Activated T-helper 1 cell treated with anti-CD3 and anti-CD28 coated beads, Interleukin-12 subunit alpha, Interleukin-12 subunit beta, Interleukin-2, Interleukin-4 antibody, amounts not matched to agents 30 ng/mL and 10 ng/mL and 1 ng/mL, durations not matched to agents 14 hours and 24 hours and 36 hours (primary cell): ENCODE measurements at regions of chr6 and their contacts with region 1.

Region 1: GRCh38 chr6:30326526-30327260 is at the start of gene TRIM39:
- DNase-seq: peak; percentile 85
- H3K4me3 Mint-ChIP-seq: peak within 1 kb of the TSS; percentile 99
- H3K27ac Mint-ChIP-seq: peak within 1 kb of the TSS; percentile 100
- H3K4me1 Mint-ChIP-seq: peaks cover 54% of the 10 kb centered on the region
- H3K27me3 Mint-ChIP-seq: no peaks in the 10 kb centered on the region
- total RNA-seq, gene TRIM39: 14.2 and 15.6 TPM in 2 replicates

Region 2: GRCh38 chr6:30259140-30260035 is 67.3 kb before region 1 on chr6:
- intact Hi-C with region 1: loop called (anchors 2 kb)
- DNase-seq: peak; percentile 65
- H3K4me3 Mint-ChIP-seq: peak overlapping the region; percentile 87
- H3K27ac Mint-ChIP-seq: peak overlapping the region; percentile 79
- H3K4me1 Mint-ChIP-seq: peaks cover 15% of the 10 kb centered on the region
- H3K27me3 Mint-ChIP-seq: peaks cover 19% of the 10 kb centered on the region

Region 3: DNA sequence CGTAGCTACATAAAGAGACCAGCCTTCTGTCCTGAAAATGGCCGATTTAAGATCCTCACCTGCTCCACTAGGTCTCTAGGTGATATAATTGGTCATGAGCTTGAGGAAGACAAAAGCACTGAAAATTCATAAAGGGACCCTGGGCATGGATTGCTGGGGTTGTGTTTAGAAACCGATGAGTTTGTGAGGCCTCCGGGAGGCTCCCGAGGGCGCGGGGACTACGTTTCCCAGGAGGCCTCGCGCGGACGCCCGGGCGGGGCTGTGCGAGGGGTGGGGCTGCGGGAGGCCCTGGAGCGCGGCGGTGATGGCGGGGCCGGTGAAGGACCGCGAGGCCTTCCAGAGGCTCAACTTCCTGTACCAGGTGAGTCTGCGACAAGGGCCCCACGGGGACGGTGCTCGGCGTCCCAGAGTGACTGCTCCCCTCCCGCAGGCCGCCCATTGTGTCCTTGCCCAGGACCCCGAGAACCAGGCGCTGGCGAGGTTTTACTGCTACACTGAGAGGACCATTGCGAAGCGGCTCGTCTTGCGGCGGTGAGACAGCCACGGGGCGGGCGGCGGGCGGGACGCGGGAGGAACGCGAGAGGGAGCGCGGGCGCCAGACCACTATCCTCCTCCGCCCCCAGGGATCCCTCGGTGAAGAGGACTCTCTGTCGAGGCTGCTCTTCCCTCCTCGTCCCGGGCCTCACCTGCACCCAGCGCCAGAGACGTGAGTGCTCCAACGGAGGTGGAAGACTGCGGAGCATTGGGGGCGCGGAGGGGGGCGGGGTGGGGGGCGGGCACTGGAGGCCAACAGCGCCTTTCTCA is 18.4 kb after region 1 on chr6 and contains the start of gene RPP21:
- intact Hi-C with region 1: loop called (anchors 1 kb)
- DNase-seq: peak; percentile 84
- H3K4me3 Mint-ChIP-seq: peak within 1 kb of the TSS; percentile 91
- H3K27ac Mint-ChIP-seq: peak within 1 kb of the TSS; percentile 80
- H3K4me1 Mint-ChIP-seq: peaks cover 39% of the 10 kb centered on the region
- H3K27me3 Mint-ChIP-seq: peaks cover 5% of the 10 kb centered on the region
- total RNA-seq, gene RPP21: 54.2 and 62.8 TPM in 2 replicates

Region 4: GRCh38 chr6:30378290-30378937 is 51.7 kb after region 1 on chr6:
- intact Hi-C with region 1: no loop called
- DNase-seq: no peak
- H3K4me3 Mint-ChIP-seq: no peak overlapping the region
- H3K27ac Mint-ChIP-seq: no peak overlapping the region
- H3K4me1 Mint-ChIP-seq: no peaks in the 10 kb centered on the region
- H3K27me3 Mint-ChIP-seq: peaks cover 44% of the 10 kb centered on the region

Region 5: DNA sequence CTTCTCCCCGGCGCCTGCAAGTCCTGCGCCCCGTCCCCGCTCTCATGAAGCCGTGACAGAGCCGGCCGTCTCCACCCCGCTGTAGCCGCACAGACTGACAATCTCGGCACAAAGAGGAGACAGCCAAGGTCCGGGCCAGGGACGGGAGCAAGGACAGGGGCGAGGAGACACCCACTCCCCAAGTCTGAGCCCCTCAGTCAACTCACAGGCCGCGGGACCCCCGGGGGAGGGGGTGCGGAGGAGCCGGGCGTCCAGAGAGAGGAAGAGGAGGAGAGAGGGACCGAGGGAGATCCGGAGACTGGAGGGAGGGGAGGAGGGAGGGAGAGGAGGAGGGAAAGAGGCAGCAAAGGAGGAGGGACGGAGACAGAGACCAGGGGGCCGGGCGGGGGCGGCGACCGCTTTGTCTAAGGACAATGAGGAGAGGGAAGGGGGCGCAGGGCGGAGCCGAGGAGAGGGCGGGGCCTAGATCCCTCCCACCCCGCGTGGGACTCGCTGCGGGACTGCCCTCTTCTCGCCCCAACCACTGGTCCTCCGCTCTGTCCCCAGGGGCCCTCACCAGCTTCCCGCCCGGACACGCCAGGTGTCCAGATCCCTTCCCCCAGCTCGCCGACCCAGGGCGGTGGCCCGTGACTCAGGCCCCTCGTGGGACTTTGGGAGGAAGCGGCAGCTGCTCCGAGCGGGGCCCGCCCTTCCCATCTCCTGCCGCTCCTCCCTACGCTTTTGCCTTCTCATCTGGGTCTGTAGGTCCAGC is 360.4 kb after region 1 on chr6:
- intact Hi-C with region 1: loop called (anchors 10 kb)
- DNase-seq: peak; percentile 83
- H3K4me3 Mint-ChIP-seq: peak overlapping the region; percentile 94
- H3K27ac Mint-ChIP-seq: peak overlapping the region; percentile 87
- H3K4me1 Mint-ChIP-seq: peaks cover 50% of the 10 kb centered on the region
- H3K27me3 Mint-ChIP-seq: no peaks in the 10 kb centered on the region

Region 6: GRCh38 chr6:31203345-31203979 is 876.8 kb after region 1 on chr6:
- intact Hi-C with region 1: loop called (anchors 5 kb)
- DNase-seq: peak; percentile 54
- H3K4me3 Mint-ChIP-seq: peak overlapping the region; percentile 90
- H3K27ac Mint-ChIP-seq: peak overlapping the region; percentile 95
- H3K4me1 Mint-ChIP-seq: peaks cover 54% of the 10 kb centered on the region
- H3K27me3 Mint-ChIP-seq: no peaks in the 10 kb centered on the region